ENCODE measurements at regions of chr3 and their contacts with region 1.

Region 1: DNA sequence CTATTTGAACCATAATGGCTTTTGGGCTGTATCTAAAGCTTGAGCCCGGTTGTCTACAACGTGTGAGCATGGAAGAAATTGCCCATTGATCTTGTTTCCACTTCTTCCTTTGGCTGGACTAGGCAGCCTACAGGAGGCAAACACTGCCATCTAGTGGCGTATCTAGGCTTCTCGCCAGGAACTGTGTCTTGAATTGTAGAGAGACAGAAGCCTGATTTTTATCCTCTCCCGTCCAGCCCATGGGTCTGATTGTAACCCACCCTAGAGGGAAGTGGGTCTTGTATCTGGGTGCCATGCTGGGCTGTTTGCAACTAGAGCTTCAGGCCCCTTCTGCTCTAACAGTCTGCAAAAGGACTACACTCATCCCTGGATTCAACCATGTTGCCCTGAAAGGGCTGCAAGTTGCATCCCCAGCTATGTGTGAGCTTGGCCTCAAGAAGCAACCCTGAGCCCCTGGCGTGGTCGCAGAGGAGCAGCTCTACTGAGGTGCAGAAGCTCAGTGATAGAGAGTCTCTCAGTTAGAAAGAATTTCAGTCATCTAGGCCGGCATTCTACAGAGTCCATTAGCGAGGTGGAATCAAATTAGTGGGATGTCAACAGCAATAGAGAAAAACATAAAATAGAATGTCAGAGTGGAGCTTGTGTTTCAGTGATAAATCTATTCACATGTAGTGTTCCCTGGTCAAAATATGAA is 170.2 kb upstream of the UMPS start:
- DNase-seq: peak; percentile 44 to 91 (median 82)

Region 2: GRCh38 chr3:124263168-124263567 is 296.9 kb before region 1 on chr3:
- intact Hi-C with region 1: no loop called
- DNase-seq: peak in 3 of 42 donors; percentile 18 to 55 (median 31)

Region 3: GRCh38 chr3:124492811-124493210 is 67.2 kb before region 1 on chr3:
- intact Hi-C with region 1: loop called (anchors 10 kb)
- DNase-seq: peak; percentile 30 to 89 (median 74)

Measured in head of caudate nucleus (tissue), 42 donors.